ENCODE measurements at regions of chr3 and their contacts with region 1.

Region 1: GRCh38 chr3:139427283-139427993 is 38.0 kb upstream of the COPB2 start:
- DNase-seq: peak; percentile 53 to 74 (median 67)
- H3K4me3 ChIP-seq: no peak overlapping the region
- H3K4me3 Mint-ChIP-seq: no peak overlapping the region
- H3K27ac ChIP-seq: no peak overlapping the region
- H3K27ac Mint-ChIP-seq: no peak overlapping the region
- H3K4me1 ChIP-seq: peaks cover 0 to 5% of the 10 kb centered on the region in 2 donors
- H3K4me1 Mint-ChIP-seq: peaks cover 7% of the 10 kb centered on the region
- H3K27me3 ChIP-seq: no peaks in the 10 kb centered on the region
- H3K27me3 Mint-ChIP-seq: peaks cover 0 to 1% (median 0%) of the 10 kb centered on the region in 3 donors
- CTCF ChIP-seq: peak; percentile 83

Region 2: GRCh38 chr3:139574026-139574947 is 146.8 kb after region 1 on chr3:
- intact Hi-C with region 1: no loop called
- DNase-seq: no peak
- H3K4me3 ChIP-seq: no peak overlapping the region
- H3K4me3 Mint-ChIP-seq: no peak overlapping the region
- H3K27ac ChIP-seq: no peak overlapping the region
- H3K27ac Mint-ChIP-seq: peak overlapping the region in 3 of 7 donors; percentile 46 to 62 (median 60)
- H3K4me1 ChIP-seq: peaks cover 40 to 44% of the 10 kb centered on the region in 2 donors
- H3K4me1 Mint-ChIP-seq: peaks cover 44% of the 10 kb centered on the region
- H3K27me3 ChIP-seq: no peaks in the 10 kb centered on the region
- H3K27me3 Mint-ChIP-seq: peaks cover 0 to 2% (median 1%) of the 10 kb centered on the region in 3 donors
- CTCF ChIP-seq: peak; percentile 20

Region 3: GRCh38 chr3:140736863-140737460 is 1309.5 kb after region 1 on chr3:
- intact Hi-C with region 1: loop called (anchors 10 kb)
- DNase-seq: peak in 2 of 3 donors; percentile 12 to 24
- H3K4me3 ChIP-seq: no peak overlapping the region
- H3K4me3 Mint-ChIP-seq: no peak overlapping the region
- H3K27ac ChIP-seq: no peak overlapping the region
- H3K27ac Mint-ChIP-seq: no peak overlapping the region
- H3K4me1 ChIP-seq: no peaks in the 10 kb centered on the region
- H3K4me1 Mint-ChIP-seq: no peaks in the 10 kb centered on the region
- H3K27me3 ChIP-seq: no peaks in the 10 kb centered on the region
- H3K27me3 Mint-ChIP-seq: peaks cover 2 to 11% (median 11%) of the 10 kb centered on the region in 3 donors
- CTCF ChIP-seq: peak; percentile 58

Region 4: GRCh38 chr3:140748903-140749302 is 1321.5 kb after region 1 on chr3:
- intact Hi-C with region 1: loop called in 1 of 2 experiments (anchors 10 kb)
- DNase-seq: no peak
- H3K4me3 ChIP-seq: no peak overlapping the region
- H3K4me3 Mint-ChIP-seq: no peak overlapping the region
- H3K27ac ChIP-seq: no peak overlapping the region
- H3K27ac Mint-ChIP-seq: no peak overlapping the region
- H3K4me1 ChIP-seq: no peaks in the 10 kb centered on the region
- H3K4me1 Mint-ChIP-seq: peaks cover 1% of the 10 kb centered on the region
- H3K27me3 ChIP-seq: peaks cover 0 to 3% of the 10 kb centered on the region in 2 donors
- H3K27me3 Mint-ChIP-seq: peaks cover 2 to 10% (median 6%) of the 10 kb centered on the region in 3 donors
- CTCF ChIP-seq: no peak

Region 5: GRCh38 chr3:140863580-140864009 is 1436.2 kb after region 1 on chr3:
- intact Hi-C with region 1: loop called (anchors 5 kb)
- DNase-seq: peak in 2 of 3 donors; percentile 45 to 62
- H3K4me3 ChIP-seq: no peak overlapping the region
- H3K4me3 Mint-ChIP-seq: no peak overlapping the region
- H3K27ac ChIP-seq: no peak overlapping the region
- H3K27ac Mint-ChIP-seq: peak overlapping the region in 1 of 7 donors; percentile 35
- H3K4me1 ChIP-seq: peaks cover 0 to 3% of the 10 kb centered on the region in 2 donors
- H3K4me1 Mint-ChIP-seq: peaks cover 4% of the 10 kb centered on the region
- H3K27me3 ChIP-seq: no peaks in the 10 kb centered on the region
- H3K27me3 Mint-ChIP-seq: peaks cover 0 to 5% (median 5%) of the 10 kb centered on the region in 3 donors
- CTCF ChIP-seq: peak; percentile 69

Measured in CD14-positive monocyte (primary cell).